Heart left ventricle (tissue), 16 donors: ENCODE measurements at regions of chr3 and their contacts with region 1.

Region 1: DNA sequence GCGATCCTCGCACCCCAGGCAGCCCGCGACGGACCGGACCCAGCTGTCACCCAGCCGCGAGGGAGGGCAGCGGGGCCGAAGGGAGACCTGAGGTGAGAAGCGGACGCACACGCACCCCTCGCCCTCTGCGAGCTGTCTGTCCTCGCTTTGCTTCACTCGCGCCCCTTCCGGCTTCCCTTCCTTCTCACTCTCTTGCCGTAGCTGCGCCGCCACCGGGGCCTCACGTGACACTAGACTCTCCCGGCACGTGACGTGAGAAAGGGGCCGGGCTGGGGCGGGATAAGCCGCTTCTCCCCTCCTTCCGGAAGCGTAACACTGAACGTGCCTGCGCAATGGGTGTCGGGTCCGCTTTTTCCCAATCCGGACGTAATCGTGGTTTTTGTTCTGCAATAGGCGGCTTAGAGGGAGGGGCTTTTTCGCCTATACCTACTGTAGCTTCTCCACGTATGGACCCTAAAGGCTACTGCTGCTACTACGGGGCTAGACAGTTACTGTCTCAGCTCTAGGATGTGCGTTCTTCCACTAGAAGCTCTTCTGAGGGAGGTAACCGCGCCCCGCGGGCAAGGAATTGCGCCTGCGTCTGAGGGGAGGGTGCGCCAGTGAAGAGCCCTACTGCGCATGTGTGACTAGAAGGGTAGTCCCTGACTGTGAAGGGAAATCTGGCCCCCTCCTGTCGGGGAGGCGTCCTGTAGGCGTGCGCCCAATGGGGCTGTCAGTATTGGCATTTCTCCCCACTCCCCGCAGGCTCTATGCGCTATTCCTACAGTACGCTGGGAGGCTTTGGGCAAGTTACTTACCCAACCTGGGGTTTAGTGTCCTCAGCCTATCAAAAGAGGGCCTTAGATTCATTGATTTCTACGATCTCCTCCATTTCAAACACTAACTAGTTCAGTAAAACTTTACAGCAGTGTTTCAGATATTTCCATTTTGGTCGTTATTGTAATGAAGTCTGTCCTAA is at the starts of genes ATG3 and SLC35A5:
- DNase-seq: peak; percentile 98 to 99 (median 99)
- ATAC-seq: peak; percentile 97 to 98 (median 97)
- H3K4me3 ChIP-seq: peak within 1 kb of the TSS; percentile 68 to 95 (median 84)
- H3K27ac ChIP-seq: peak within 1 kb of the TSS; percentile 86 to 100 (median 96)
- H3K4me1 ChIP-seq: peaks cover 3 to 50% (median 30%) of the 10 kb centered on the region in 12 donors
- H3K27me3 ChIP-seq: no peaks in the 10 kb centered on the region
- CTCF ChIP-seq: peak in 3 of 12 donors; percentile 12 to 20 (median 13)
- POLR2A ChIP-seq: peak in 1 of 2 donors; percentile 65
- total RNA-seq, gene ATG3: 36.0 to 62.3 (median 47.2) TPM
- total RNA-seq, gene SLC35A5: 12.7 to 28.8 (median 20.2) TPM

Region 2: GRCh38 chr3:112814266-112814665 is 252.3 kb after region 1 on chr3:
- intact Hi-C with region 1: no loop called
- DNase-seq: no peak
- ATAC-seq: peak in 3 of 4 donors; percentile 40 to 55 (median 47)
- H3K4me3 ChIP-seq: no peak overlapping the region
- H3K27ac ChIP-seq: peak overlapping the region in 2 of 12 donors; percentile 62 to 81
- H3K4me1 ChIP-seq: peaks cover 0 to 49% (median 5%) of the 10 kb centered on the region in 12 donors
- H3K27me3 ChIP-seq: peaks cover 0 to 5% (median 0%) of the 10 kb centered on the region in 9 donors
- CTCF ChIP-seq: peak in 10 of 12 donors; percentile 13 to 60 (median 40)
- POLR2A ChIP-seq: no peak

Region 3: DNA sequence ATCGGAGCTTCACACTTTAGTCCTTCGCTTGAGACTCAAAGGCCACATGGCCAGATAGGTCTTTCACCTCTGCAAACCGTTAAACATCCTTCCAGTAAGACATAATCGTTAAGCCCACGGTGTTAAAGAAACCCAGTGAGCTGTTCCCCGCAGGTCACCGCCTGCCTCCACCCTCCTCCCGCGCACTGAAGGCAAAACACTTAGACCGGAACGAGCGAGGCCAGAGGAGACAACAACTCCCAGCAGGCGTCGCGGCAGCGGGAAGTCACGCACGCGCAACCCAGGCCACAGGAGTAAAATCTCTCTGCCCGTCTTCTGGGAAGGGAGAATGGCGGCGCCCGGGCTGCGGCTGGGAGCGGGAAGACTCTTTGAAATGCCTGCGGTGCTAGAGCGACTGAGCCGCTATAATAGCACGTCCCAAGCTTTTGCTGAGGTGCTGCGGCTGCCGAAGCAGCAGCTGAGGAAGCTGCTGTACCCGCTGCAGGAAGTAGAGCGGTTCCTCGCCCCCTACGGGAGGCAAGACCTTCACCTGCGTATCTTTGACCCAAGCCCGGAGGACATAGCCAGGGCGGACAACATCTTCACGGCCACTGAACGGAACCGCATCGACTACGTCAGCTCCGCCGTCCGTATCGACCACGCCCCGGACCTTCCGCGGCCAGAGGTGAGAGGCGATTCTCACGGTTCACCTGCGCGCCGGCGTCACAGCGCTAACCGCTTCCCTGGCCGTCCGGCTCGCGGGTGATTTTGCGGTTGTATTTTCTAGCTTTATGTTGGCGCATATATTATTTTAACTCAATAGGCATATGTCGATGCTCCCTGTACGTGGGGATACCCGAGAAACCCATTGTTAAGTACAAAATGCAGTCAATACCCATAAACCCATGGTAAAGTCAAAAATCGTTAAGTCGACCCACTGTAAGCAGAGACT is 428.9 kb after region 1 on chr3 and contains the start of gene GTPBP8:
- intact Hi-C with region 1: loop called in 1 of 10 experiments (anchors 10 kb)
- DNase-seq: peak; percentile 91 to 96 (median 95)
- ATAC-seq: peak; percentile 96 to 99 (median 99)
- H3K4me3 ChIP-seq: peak within 1 kb of the TSS; percentile 47 to 94 (median 84)
- H3K27ac ChIP-seq: peak within 1 kb of the TSS; percentile 73 to 98 (median 95)
- H3K4me1 ChIP-seq: peaks cover 0 to 24% (median 17%) of the 10 kb centered on the region in 12 donors
- H3K27me3 ChIP-seq: no peaks in the 10 kb centered on the region
- CTCF ChIP-seq: peak in 5 of 12 donors; percentile 5 to 21 (median 7)
- POLR2A ChIP-seq: peak; percentile 75 to 93
- total RNA-seq, gene GTPBP8: 17.3 to 52.2 (median 24.6) TPM

Region 4: GRCh38 chr3:113019182-113020137 is 457.4 kb after region 1 on chr3:
- intact Hi-C with region 1: loop called in 1 of 10 experiments (anchors 10 kb)
- DNase-seq: peak; percentile 90 to 94 (median 92)
- ATAC-seq: peak; percentile 94 to 99 (median 98)
- H3K4me3 ChIP-seq: peak overlapping the region; percentile 40 to 98 (median 81)
- H3K27ac ChIP-seq: peak overlapping the region; percentile 79 to 99 (median 96)
- H3K4me1 ChIP-seq: peaks cover 0 to 38% (median 19%) of the 10 kb centered on the region in 12 donors
- H3K27me3 ChIP-seq: no peaks in the 10 kb centered on the region
- CTCF ChIP-seq: no peak
- POLR2A ChIP-seq: peak in 1 of 2 donors; percentile 57